ENCODE measurements at regions of chr11 and their contacts with region 1.

Region 1: DNA sequence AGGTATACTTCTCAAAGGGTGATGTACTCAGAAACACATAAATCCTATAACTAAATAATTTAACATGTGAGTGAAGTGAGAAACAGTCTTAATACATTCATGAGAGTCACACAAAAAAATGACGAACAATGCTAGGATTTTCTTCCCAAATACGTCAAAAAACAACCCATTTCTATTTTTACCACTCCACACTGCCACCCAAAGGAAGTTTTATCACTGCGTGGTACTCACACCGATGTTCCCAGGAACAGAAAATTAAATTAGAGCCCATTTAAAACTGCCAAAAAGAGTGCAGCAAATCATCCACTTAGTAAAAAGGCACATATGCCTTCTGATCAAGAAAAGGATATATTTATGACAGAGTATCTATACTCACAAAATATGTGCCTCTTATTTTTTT is 710.9 kb upstream of the FAT3 start:
- DNase-seq: peak; percentile 56
- H3K4me3 ChIP-seq: no peak overlapping the region
- H3K27ac ChIP-seq: no peak overlapping the region
- H3K4me1 ChIP-seq: no peaks in the 10 kb centered on the region
- H3K27me3 ChIP-seq: no peaks in the 10 kb centered on the region
- CTCF ChIP-seq: peak; percentile 81

Region 2: GRCh38 chr11:90476442-90477007 is 1037.2 kb before region 1 on chr11:
- CTCF ChIA-PET with region 1: no interaction called
- POLR2A ChIA-PET with region 1: no interaction called
- intact Hi-C with region 1: loop called (anchors 5 kb)
- DNase-seq: peak; percentile 76
- H3K4me3 ChIP-seq: no peak overlapping the region
- H3K27ac ChIP-seq: no peak overlapping the region
- H3K4me1 ChIP-seq: peaks cover 14% of the 10 kb centered on the region
- H3K27me3 ChIP-seq: no peaks in the 10 kb centered on the region
- CTCF ChIP-seq: peak; percentile 72

Region 3: DNA sequence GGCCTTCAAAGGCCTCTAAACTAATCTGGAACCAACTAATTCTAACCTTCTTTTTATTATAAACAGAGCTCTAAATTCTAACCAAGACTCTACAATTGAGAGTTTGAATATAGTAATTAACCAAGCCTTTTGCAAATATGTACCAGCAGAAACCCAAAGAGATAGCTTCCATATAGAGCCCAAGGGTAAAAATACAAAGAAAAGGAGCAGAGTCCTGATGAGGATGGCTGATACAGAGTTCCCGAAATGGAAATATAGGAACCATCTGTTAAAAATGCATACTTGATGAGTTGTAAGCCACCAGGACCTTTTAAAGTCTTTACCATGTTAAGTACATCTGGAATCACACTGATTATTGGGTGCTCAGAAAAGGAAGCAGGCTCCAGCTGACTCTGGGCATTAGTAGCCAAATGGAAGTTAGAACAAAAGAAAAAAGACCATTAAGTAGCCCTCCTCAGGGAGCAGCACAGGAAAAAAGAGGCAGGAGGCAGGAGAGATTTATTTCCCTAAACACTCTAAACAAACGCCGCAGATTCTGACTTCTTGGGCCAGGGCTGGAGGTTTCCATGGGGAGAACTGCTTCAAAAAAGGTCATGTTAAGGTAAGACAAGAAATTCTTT is 247.8 kb after region 1 on chr11:
- CTCF ChIA-PET with region 1: no interaction called
- POLR2A ChIA-PET with region 1: no interaction called
- intact Hi-C with region 1: loop called (anchors 5 kb)
- DNase-seq: peak; percentile 88
- H3K4me3 ChIP-seq: no peak overlapping the region
- H3K27ac ChIP-seq: no peak overlapping the region
- H3K4me1 ChIP-seq: peaks cover 17% of the 10 kb centered on the region
- H3K27me3 ChIP-seq: no peaks in the 10 kb centered on the region
- CTCF ChIP-seq: no peak